ENCODE measurements at regions of chr3 and their contacts with region 1.

Region 1: DNA sequence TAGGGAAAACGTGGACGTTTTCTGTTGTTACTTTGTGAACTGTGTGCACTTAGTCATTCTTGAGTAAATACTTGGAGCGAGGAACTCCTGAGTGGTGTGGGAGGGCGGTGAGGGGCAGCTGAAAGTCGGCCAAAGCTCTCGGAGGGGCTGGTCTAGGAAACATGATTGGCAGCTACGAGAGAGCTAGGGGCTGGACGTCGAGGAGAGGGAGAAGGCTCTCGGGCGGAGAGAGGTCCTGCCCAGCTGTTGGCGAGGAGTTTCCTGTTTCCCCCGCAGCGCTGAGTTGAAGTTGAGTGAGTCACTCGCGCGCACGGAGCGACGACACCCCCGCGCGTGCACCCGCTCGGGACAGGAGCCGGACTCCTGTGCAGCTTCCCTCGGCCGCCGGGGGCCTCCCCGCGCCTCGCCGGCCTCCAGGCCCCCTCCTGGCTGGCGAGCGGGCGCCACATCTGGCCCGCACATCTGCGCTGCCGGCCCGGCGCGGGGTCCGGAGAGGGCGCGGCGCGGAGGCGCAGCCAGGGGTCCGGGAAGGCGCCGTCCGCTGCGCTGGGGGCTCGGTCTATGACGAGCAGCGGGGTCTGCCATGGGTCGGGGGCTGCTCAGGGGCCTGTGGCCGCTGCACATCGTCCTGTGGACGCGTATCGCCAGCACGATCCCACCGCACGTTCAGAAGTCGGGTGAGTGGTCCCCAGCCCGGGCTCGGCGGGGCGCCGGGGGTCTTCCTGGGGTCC is at the start of gene TGFBR2:
- DNase-seq: peak; percentile 84
- ATAC-seq: peak; percentile 81
- H3K4me3 Mint-ChIP-seq: peak within 1 kb of the TSS; percentile 97
- H3K27ac Mint-ChIP-seq: peak within 1 kb of the TSS; percentile 99
- H3K4me1 Mint-ChIP-seq: peaks cover 85% of the 10 kb centered on the region
- H3K27me3 Mint-ChIP-seq: no peaks in the 10 kb centered on the region
- CTCF ChIP-seq: no peak
- total RNA-seq, gene TGFBR2: 99.1 and 104 TPM in 2 replicates

Region 2: GRCh38 chr3:30319713-30320112 is 286.8 kb before region 1 on chr3:
- CTCF ChIA-PET with region 1: interaction called, 14 read pairs
- POLR2A ChIA-PET with region 1: interaction called, 24 read pairs
- intact Hi-C with region 1: loop called (anchors 1 kb)
- DNase-seq: no peak
- ATAC-seq: peak; percentile 98
- H3K4me3 Mint-ChIP-seq: no peak overlapping the region
- H3K27ac Mint-ChIP-seq: no peak overlapping the region
- H3K4me1 Mint-ChIP-seq: peaks cover 6% of the 10 kb centered on the region
- H3K27me3 Mint-ChIP-seq: no peaks in the 10 kb centered on the region
- CTCF ChIP-seq: peak; percentile 46

Region 3: DNA sequence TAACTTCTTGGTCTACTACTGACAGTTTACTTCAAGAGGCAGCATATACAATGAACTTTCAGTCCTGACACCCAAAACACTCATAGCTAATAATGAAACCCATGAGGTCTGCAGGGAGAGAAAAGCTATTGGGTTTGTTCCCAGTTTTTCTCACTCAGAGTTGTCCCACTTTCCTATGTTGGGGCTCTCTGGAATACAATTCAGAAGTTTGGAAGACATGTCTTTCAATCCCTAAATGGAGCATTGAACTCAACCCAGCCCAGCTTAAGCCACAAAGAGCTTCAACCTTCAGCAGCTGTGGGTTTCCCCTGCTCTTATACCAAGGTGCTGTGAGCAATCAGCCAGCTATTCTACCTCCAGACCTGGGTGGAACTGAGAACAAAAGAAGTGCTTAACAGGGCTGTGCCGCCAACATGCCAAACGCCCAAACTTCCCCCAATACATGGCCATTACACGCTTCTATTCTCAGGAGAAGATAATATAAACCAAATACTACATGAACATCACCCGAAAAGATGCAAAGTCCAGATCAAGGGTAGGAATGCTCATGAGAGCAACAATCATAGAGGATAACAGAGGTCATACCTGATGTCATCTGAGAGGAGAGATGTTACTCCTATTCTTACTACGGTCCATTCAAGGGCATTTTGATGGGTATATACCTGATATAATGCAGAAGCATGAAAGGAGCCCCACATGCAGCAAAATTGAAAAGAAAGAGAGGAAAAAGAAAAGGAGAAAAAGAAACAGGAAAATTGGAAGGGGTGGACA is 131.2 kb before region 1 on chr3:
- CTCF ChIA-PET with region 1: no interaction called
- POLR2A ChIA-PET with region 1: interaction called, 14 read pairs
- intact Hi-C with region 1: loop called (anchors 2 kb)
- DNase-seq: no peak
- ATAC-seq: peak; percentile 94
- H3K4me3 Mint-ChIP-seq: peak overlapping the region; percentile 54
- H3K27ac Mint-ChIP-seq: peak overlapping the region; percentile 75
- H3K4me1 Mint-ChIP-seq: peaks cover 76% of the 10 kb centered on the region
- H3K27me3 Mint-ChIP-seq: no peaks in the 10 kb centered on the region
- CTCF ChIP-seq: no peak

Region 4: DNA sequence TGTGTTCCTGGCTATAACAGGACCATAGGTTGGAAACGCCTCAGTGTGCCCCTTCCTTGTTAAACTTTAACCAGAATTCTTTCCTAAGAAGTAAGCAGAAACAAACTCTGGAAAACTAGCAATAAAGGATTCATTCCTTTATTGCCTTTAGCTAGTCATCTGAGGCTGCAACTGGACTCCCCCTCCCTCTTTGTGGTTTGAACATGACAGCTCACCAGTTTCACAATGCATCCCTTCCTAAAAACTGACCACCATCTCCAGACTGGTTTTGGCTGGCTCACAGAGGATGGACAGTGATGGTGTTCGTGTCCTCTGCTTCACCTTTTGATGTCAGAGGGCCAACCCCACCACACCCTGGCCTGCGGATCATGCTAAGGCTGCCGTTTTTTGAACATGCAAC is 28.0 kb before region 1 on chr3:
- CTCF ChIA-PET with region 1: no interaction called
- POLR2A ChIA-PET with region 1: no interaction called
- intact Hi-C with region 1: no loop called
- DNase-seq: no peak
- ATAC-seq: no peak
- H3K4me3 Mint-ChIP-seq: no peak overlapping the region
- H3K27ac Mint-ChIP-seq: no peak overlapping the region
- H3K4me1 Mint-ChIP-seq: peaks cover 27% of the 10 kb centered on the region
- H3K27me3 Mint-ChIP-seq: no peaks in the 10 kb centered on the region
- CTCF ChIP-seq: no peak

Region 5: GRCh38 chr3:30628901-30629590 is 22.6 kb after region 1 on chr3:
- CTCF ChIA-PET with region 1: interaction called, 7 read pairs
- POLR2A ChIA-PET with region 1: interaction called, 35 read pairs
- intact Hi-C with region 1: loop called (anchors 1 kb)
- DNase-seq: no peak
- ATAC-seq: peak; percentile 52
- H3K4me3 Mint-ChIP-seq: peak overlapping the region; percentile 49
- H3K27ac Mint-ChIP-seq: peak overlapping the region; percentile 91
- H3K4me1 Mint-ChIP-seq: peaks cover 94% of the 10 kb centered on the region
- H3K27me3 Mint-ChIP-seq: no peaks in the 10 kb centered on the region
- CTCF ChIP-seq: no peak

Region 6: DNA sequence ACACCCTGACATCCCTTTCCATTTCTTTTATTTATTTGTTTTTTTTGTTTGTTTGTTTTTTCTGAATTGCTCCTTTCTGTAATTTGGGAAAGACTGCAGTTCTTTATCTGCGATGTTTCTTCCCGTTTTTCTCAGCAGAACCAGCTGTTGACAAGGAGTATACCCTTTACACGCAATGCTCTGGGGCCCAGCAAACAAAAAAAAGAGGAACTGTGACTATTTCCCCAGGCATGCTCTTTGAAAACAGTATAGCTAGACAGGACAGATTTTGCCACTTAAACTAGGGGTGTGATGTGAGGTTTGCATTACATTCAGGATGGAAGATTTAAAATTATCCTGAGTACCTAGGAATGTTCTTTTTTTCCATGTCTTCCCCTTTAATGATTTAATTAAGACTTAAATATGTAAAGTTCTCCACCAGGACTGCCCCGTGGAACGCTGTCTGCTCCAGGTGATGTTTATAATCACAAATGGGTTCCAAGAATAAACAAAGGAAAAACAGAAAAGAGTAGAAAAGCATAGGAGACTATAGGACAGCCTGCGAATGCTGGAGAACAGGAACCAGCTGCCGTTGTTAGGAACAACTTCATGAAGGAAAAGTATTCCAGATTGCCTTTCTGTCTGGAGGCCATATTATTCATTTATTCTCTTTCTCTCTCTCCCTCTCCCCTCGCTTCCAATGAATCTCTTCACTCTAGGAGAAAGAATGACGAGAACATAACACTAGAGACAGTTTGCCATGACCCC is 43.3 kb after region 1 on chr3:
- CTCF ChIA-PET with region 1: no interaction called
- POLR2A ChIA-PET with region 1: interaction called, 63 read pairs
- intact Hi-C with region 1: loop called (anchors 1 kb)
- DNase-seq: no peak
- ATAC-seq: peak; percentile 67
- H3K4me3 Mint-ChIP-seq: peak overlapping the region; percentile 55
- H3K27ac Mint-ChIP-seq: peak overlapping the region; percentile 86
- H3K4me1 Mint-ChIP-seq: peaks cover 99% of the 10 kb centered on the region
- H3K27me3 Mint-ChIP-seq: no peaks in the 10 kb centered on the region
- CTCF ChIP-seq: no peak

Region 7: GRCh38 chr3:31960793-31961431 is 1354.4 kb after region 1 on chr3:
- CTCF ChIA-PET with region 1: no interaction called
- POLR2A ChIA-PET with region 1: no interaction called
- intact Hi-C with region 1: loop called (anchors 10 kb)
- DNase-seq: no peak
- ATAC-seq: peak; percentile 66
- H3K4me3 Mint-ChIP-seq: peak overlapping the region; percentile 78
- H3K27ac Mint-ChIP-seq: peak overlapping the region; percentile 94
- H3K4me1 Mint-ChIP-seq: peaks cover 80% of the 10 kb centered on the region
- H3K27me3 Mint-ChIP-seq: no peaks in the 10 kb centered on the region
- CTCF ChIP-seq: no peak

Measured in activated B cell treated with CpG ODN at 0.5 μM for 24 hours (primary cell).